Left cardiac atrium (tissue), 4 donors: ENCODE measurements at regions of chr1 and their contacts with region 1.

Region 1: GRCh38 chr1:65958561-65959350 is 166.1 kb downstream of the PDE4B start:
- DNase-seq: peak; percentile 23
- ATAC-seq: peak in 1 of 2 donors; percentile 49

Region 2: DNA sequence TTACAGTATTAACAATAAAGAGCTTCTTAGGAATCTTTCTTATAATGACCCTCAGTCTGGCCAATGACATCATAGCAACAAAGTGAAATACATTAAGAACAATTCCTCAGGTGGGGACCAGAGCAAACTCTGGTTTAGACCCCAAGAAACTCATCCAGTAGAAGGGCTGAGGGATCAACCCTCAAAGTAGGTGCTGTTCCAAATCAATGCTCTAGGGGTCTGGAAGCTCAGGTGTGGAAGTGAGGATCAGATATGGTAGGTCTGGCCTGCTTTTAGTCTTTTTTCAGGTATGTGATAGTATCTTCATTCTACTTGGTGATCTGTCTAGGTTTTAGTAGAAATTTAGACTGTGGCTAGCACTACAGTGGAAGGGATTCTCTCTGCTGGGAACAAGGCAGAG is 125.7 kb after region 1 on chr1:
- intact Hi-C with region 1: no loop called
- DNase-seq: no peak
- ATAC-seq: no peak

Region 3: GRCh38 chr1:66242646-66243547 is 284.1 kb after region 1 on chr1:
- intact Hi-C with region 1: loop called (anchors 1 to 2 kb)
- DNase-seq: peak; percentile 90
- ATAC-seq: peak; percentile 97 to 99

Region 4: DNA sequence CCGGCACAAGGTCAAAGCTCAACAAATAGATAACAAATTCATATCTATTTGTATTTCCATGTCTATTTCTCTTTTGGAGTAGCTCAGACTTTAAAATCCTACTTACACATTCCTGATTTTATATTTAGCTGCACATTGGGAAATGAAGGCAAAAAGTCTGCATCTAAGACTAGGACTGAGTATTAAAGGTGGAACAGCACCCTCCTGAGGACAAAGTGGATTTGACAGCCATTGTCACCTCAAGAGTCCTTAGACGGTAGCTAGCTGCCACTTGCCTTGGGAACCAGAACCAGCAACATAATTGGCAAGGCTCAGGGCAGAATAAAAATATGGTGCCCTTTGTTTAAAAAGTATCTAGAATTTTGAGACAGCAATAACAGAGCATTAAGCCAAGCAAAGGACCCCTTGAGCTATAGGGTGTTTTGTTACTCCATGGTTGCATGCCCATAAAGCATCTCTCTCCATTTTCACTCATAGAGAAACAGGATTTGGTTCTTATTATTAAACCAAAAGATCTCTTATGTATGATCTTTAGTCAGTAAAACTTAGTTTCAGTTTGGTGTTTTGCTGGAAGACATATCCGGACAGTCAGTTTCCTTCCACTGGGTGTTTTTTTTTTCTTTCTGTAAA is 545.2 kb after region 1 on chr1:
- intact Hi-C with region 1: loop called in 1 of 2 experiments (anchors 10 kb)
- DNase-seq: no peak
- ATAC-seq: peak; percentile 67 to 81